ENCODE measurements at regions of chr12 and their contacts with region 1.

Region 1: GRCh38 chr12:98244136-98244535 is 271.3 kb upstream of the TMPO start:
- DNase-seq: no peak
- H3K4me3 ChIP-seq: no peak overlapping the region
- CTCF ChIP-seq: no peak
- POLR2A ChIP-seq: no peak

Region 2: GRCh38 chr12:98174428-98174809 is 69.7 kb before region 1 on chr12:
- intact Hi-C with region 1: loop called (anchors 2 kb)
- DNase-seq: no peak
- H3K4me3 ChIP-seq: no peak overlapping the region
- CTCF ChIP-seq: no peak
- POLR2A ChIP-seq: no peak

Region 3: DNA sequence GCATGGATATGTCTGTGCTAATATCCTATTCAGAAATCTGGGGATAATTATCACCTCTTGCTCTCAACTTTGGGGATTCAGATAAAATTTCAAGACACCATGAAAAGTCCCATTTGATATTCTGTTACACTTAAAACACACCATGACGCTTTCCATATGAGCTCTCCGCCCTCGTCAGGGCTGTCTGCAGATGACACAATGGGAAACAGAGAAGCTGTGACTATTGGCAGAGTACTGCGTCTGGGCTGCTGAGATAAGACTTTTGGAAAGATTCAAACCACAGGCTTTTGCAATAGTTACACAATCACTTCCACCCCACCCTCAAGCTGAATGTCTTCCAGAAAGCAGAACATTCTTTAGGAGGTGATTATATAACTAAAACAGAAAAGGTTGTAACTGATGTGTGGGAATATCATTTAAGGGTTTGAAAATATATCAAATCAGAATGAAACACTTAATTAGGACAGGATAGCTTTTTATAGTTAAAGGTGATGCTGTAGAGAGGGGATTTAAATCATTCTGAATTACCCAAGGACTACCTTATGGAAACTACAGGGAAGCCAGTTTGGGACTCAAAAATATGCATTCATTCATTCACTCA is 195.9 kb after region 1 on chr12:
- intact Hi-C with region 1: no loop called
- DNase-seq: peak in 1 of 2 donors; percentile 79
- H3K4me3 ChIP-seq: no peak overlapping the region
- CTCF ChIP-seq: no peak
- POLR2A ChIP-seq: no peak

Measured in lower leg skin (tissue), 4 donors.